IMR-90 (cell line): ENCODE measurements at regions of chr3 and their contacts with region 1.

Region 1: GRCh38 chr3:195914648-195915473 is 6.5 kb upstream of the TNK2 start:
- DNase-seq: peak; percentile 97
- ATAC-seq: peak; percentile 98
- H3K4me3 ChIP-seq: no peak overlapping the region
- H3K27ac ChIP-seq: no peak overlapping the region
- H3K4me1 ChIP-seq: peaks cover 4% of the 10 kb centered on the region; the same call in 1 of the 2 replicates
- H3K27me3 ChIP-seq: peaks cover 10% of the 10 kb centered on the region
- CTCF ChIP-seq: peak; percentile 99
- POLR2A ChIP-seq: 0 out of 2 replicates have a peak, but pooled peaks have one; percentile 37
- RAD21 ChIP-seq: peak; percentile 94

Region 2: GRCh38 chr3:195894780-195895607 is 19.9 kb before region 1 on chr3:
- CTCF ChIA-PET with region 1: interaction called, 10 read pairs
- POLR2A ChIA-PET with region 1: no interaction called
- dilution Hi-C with region 1: no loop called
- in situ Hi-C with region 1: no loop called
- intact Hi-C with region 1: loop called (anchors 2 kb)
- DNase-seq: peak; percentile 74
- ATAC-seq: peak; percentile 58
- H3K4me3 ChIP-seq: peak overlapping the region; percentile 57
- H3K27ac ChIP-seq: peak overlapping the region; percentile 61
- H3K4me1 ChIP-seq: peaks cover 31% of the 10 kb centered on the region
- H3K27me3 ChIP-seq: no peaks in the 10 kb centered on the region
- CTCF ChIP-seq: peak; percentile 94
- POLR2A ChIP-seq: no peak
- RAD21 ChIP-seq: peak; percentile 92